Right ventricle myocardium inferior (tissue), 1 donor: ENCODE measurements at regions of chr2 and their contacts with region 1.

Region 1: GRCh38 chr2:69643602-69644505 is at the start of gene AAK1:
- DNase-seq: peak; percentile 96
- ATAC-seq: peak; percentile 95
- total RNA-seq, gene AAK1: 76.2 TPM

Region 2: DNA sequence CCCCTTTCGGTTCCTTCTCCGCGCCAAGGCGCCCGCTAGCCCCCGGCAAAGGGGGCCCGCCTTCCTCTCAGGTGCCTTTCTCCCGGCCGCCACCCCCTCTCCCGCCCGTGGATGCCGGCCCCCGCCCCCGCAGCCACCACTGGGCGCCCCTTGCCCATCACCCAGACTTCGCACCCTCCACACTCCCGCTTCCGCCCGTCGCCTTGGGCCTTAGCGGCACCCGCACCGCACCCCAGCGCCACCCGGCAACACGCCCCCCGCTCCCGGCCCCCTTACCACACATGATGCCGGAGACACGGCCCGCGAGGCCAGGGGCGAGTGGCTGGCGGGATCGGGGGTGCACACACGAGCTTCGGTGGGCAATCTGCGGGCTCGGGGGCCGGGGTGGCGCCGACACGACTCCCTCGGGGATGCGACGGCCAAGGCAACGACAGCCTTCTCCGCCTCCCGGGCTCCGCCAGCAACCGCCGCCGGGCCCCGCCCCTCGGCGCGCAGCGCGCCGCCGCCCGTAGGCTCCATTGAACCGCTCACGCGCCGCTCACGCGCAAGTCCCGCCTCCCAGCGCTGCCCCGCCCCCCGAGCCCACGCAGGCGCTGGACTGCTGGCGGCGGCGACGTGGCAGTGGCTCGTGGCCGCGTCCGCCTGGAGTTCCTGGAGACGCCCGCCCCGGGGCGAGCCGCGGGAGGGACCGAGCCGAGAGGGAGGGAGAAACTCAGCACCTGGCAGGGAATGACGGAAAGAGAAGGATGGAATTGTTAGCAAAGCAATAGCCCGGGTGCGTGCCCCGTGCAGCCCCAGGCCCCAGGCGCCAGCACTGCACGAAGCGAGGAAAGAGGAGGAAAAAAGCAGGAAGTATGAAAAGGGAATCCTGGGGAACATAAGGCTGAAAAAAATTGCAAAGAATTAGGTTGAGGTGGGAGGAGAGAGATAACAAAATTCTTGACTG is 256.8 kb before region 1 on chr2 and contains the start of gene GFPT1:
- intact Hi-C with region 1: loop called (anchors 10 kb)
- DNase-seq: peak; percentile 97
- ATAC-seq: peak; percentile 99
- total RNA-seq, gene GFPT1: 38.9 TPM

Region 3: GRCh38 chr2:69559442-69560146 is 84.3 kb before region 1 on chr2:
- intact Hi-C with region 1: loop called (anchors 2 kb)
- DNase-seq: no peak
- ATAC-seq: peak; percentile 79

Region 4: DNA sequence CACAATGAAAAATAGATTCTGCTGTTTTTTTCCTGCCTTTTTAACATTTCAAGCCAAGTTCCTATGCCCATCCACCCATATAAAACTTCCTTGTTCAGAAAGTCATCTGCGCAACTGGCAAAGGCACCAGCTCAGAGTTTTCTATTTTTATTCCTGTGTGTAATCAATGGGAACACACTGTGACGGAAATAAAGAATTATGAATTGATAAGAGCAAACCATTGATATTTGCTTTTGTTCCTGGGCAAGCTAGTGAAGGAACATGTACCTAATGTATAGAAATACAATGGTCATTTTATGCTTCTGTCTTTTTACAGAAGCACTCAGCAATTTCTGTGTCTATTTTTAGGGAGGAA is 30.4 kb after region 1 on chr2:
- intact Hi-C with region 1: loop called (anchors 2 kb)
- DNase-seq: no peak
- ATAC-seq: peak; percentile 71

Region 5: DNA sequence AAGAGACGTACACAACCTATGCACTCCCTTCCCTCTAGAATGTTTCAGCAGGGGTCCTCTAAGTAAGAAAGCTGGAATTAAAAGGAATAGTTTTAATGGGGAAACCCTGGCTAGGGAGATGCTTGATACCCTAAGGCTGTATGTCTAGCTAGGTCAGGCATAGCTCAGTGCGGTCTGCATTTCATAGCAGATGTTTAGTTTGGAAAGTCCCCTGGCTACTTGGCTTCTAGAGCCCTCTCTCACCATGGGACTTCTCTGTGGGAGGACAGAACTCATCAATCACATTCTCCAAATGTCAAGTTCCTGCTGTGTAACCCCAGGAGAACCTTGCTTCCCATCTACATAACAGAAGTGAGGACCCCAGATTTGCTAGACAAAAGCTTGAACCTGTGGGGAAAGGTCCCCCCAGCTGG is 74.0 kb after region 1 on chr2:
- intact Hi-C with region 1: loop called (anchors 5 kb)
- DNase-seq: no peak
- ATAC-seq: no peak